HepG2 (cell line): ENCODE measurements at regions of chr6 and their contacts with region 1.

Region 1: GRCh38 chr6:28683944-28684538 is 158.4 kb downstream of the GPX5 start:
- DNase-seq: peak; percentile 68
- ATAC-seq: peak; percentile 86
- H3K4me3 ChIP-seq: peak overlapping the region in 2 of 3 experiments; percentile 37 to 44; a peak in 3 of 6 replicates
- H3K27ac ChIP-seq: no peak overlapping the region
- H3K4me1 ChIP-seq: peaks cover 34% of the 10 kb centered on the region
- H3K27me3 ChIP-seq: peaks cover 0 to 13% of the 10 kb centered on the region in 2 experiments; a peak in 2 of 5 replicates
- CTCF ChIP-seq: peak; percentile 91
- EP300 ChIP-seq: no peak
- POLR2A ChIP-seq: no peak
- RAD21 ChIP-seq: peak; percentile 72; the same call in 1 of the 2 replicates

Region 2: GRCh38 chr6:28393911-28394662 is 290.0 kb before region 1 on chr6:
- CTCF ChIA-PET with region 1: interaction called, 10 read pairs
- POLR2A ChIA-PET with region 1: no interaction called
- in situ Hi-C with region 1: loop called (anchors 10 kb)
- intact Hi-C with region 1: loop called (anchors 1 kb)
- DNase-seq: peak; percentile 42
- ATAC-seq: peak; percentile 70
- H3K4me3 ChIP-seq: no peak overlapping the region
- H3K27ac ChIP-seq: no peak overlapping the region
- H3K4me1 ChIP-seq: peaks cover 54% of the 10 kb centered on the region
- H3K27me3 ChIP-seq: no peaks in the 10 kb centered on the region; a peak in 1 of 5 replicates
- CTCF ChIP-seq: peak; percentile 45
- EP300 ChIP-seq: no peak
- POLR2A ChIP-seq: no peak
- RAD21 ChIP-seq: no peak; the same call in 1 of the 2 replicates

Region 3: GRCh38 chr6:28496099-28496779 is 187.8 kb before region 1 on chr6:
- CTCF ChIA-PET with region 1: interaction called, 4 read pairs
- POLR2A ChIA-PET with region 1: no interaction called
- in situ Hi-C with region 1: loop called (anchors 5 kb)
- intact Hi-C with region 1: loop called (anchors 2 kb)
- DNase-seq: peak; percentile 20
- ATAC-seq: peak; percentile 40; the same call in 2 of the 3 replicates
- H3K4me3 ChIP-seq: no peak overlapping the region
- H3K27ac ChIP-seq: no peak overlapping the region
- H3K4me1 ChIP-seq: no peaks in the 10 kb centered on the region
- H3K27me3 ChIP-seq: no peaks in the 10 kb centered on the region
- CTCF ChIP-seq: peak; percentile 58
- EP300 ChIP-seq: no peak
- POLR2A ChIP-seq: no peak
- RAD21 ChIP-seq: 0 out of 2 replicates have a peak, but pooled peaks have one; percentile 12

Region 4: DNA sequence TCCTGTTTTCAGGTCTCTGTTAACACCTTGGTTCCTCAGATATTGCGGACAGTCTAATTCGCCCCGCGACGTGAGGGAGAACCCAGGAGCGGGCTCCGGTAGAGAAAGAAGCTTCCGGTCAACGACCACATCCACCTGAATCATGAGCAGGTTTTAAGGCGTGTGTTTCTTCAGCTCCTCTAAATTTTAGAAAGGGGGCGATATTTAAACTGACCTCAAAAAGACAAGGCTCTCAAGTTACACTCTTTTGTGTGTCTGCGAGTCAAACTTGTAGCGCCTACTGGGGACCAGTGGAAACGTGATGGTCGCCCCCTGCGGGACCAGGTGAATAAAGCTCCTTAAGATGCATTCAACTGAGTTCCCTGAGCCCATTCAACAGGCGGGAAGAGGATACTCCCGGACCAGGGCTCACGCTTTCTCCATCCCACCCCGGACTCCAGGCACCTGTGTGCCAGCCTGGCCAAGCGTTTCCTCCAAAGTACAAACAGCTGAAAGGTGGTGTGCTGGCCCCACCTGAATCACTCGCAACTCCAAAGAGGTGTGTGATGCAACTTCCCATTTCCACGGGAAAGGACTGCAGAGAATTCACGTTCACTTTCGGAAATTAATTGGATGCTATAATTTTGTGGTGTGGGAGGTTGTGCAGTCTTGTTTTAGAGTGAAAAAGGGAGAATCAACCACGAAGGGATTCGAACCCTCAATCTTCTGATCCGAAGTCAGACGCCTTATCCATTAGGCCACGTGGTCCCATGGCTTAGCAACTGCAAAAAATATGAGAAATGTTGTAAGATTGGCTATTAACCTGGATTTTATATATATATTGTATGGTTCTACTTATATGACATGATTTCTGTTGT is 141.4 kb before region 1 on chr6:
- CTCF ChIA-PET with region 1: no interaction called
- POLR2A ChIA-PET with region 1: no interaction called
- in situ Hi-C with region 1: no loop called
- intact Hi-C with region 1: loop called (anchors 1 kb)
- DNase-seq: peak; percentile 80
- ATAC-seq: peak; percentile 84
- H3K4me3 ChIP-seq: peak overlapping the region; percentile 53 to 76 (median 64)
- H3K27ac ChIP-seq: no peak overlapping the region
- H3K4me1 ChIP-seq: peaks cover 22% of the 10 kb centered on the region
- H3K27me3 ChIP-seq: peaks cover 0 to 3% of the 10 kb centered on the region in 2 experiments; a peak in 2 of 5 replicates
- CTCF ChIP-seq: peak; percentile 75
- EP300 ChIP-seq: no peak
- POLR2A ChIP-seq: no peak
- RAD21 ChIP-seq: peak; percentile 71

Region 5: DNA sequence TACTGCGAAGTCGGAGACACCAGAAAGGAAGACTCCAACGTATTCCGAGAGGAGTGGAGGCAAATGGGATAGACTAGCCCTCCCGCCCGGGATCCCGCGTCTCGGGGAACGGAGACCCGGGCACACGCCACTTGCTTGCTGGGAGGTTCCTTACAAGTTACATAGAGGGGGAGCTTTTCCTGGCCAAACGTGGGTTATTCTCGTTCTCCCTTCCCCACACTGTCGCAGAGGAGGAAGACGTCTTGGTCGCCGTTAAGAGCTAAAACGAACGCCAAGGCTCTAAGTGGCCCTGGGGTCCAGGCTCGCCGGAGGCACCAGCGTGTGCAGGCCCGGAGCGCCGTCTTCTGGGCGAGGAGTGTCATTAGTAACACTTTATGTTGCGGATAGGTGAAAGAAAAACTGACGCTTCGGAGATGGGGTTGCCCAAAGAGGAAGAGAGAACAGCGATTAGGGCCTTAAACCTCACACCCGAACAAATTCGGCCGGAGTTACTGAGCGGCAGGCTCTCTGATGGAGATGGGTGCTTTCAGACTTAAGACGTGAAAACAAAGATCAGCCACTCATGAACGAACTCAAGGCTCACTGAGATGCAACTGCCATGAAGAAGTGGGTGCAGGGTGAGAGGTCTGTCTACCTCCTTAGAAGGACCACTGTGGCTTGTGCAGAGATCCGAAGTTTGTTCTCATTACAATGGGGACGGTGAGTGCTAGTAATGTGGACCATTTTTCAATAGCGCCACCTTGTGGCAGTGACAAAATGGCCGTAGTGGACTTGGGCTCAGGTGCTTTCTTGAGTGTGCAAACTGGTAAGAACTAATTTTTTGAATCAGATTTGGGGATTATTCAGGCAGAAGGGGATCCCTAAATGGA is 332.8 kb after region 1 on chr6:
- CTCF ChIA-PET with region 1: interaction called, 12 read pairs
- POLR2A ChIA-PET with region 1: no interaction called
- in situ Hi-C with region 1: loop called (anchors 10 kb)
- intact Hi-C with region 1: loop called (anchors 1 kb)
- DNase-seq: peak; percentile 80
- ATAC-seq: peak; percentile 90
- H3K4me3 ChIP-seq: peak overlapping the region; percentile 67 to 82 (median 70)
- H3K27ac ChIP-seq: peak overlapping the region; percentile 15
- H3K4me1 ChIP-seq: peaks cover 22% of the 10 kb centered on the region
- H3K27me3 ChIP-seq: no peaks in the 10 kb centered on the region; a peak in 2 of 5 replicates
- CTCF ChIP-seq: peak; percentile 82
- EP300 ChIP-seq: no peak
- POLR2A ChIP-seq: no peak
- RAD21 ChIP-seq: peak; percentile 81